ENCODE measurements at regions of chr6 and their contacts with region 1.

Region 1: DNA sequence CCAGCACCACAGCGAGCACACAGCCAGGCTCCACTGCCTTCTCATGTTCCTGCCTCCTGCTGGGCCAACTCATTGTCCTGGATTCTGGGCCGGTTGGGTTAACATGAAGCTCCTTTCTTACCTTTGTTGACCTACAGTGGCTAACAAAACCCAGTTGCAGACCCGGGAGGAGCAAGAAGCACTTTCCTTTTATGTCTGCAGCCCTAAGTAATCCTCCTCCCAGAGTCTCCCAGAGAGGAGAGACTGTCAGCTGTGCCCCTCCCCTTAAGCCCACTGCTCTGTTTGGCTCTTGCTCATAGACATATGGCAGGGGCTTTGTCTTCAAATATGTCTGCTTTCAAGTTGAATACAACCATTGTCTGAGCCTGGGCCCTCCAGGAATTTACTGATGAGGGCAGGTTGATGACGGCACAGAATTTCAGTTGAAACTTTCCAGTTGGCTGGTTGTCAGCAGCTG is 55.2 kb downstream of the PSMB1 start:
- DNase-seq: peak; percentile 66 to 67
- H3K4me3 ChIP-seq: peak overlapping the region in 1 of 4 experiments; percentile 21; a peak in 1 of 8 replicates
- H3K27ac ChIP-seq: no peak overlapping the region; the same call in 1 of the 2 replicates
- H3K4me1 ChIP-seq: peaks cover 0 to 13% (median 5%) of the 10 kb centered on the region in 4 experiments; a peak in 4 of 7 replicates
- H3K27me3 ChIP-seq: no peaks in the 10 kb centered on the region; a peak in 1 of 7 replicates
- CTCF ChIP-seq: no peak
- EP300 ChIP-seq: no peak
- POLR2A ChIP-seq: no peak
- RAD21 ChIP-seq: no peak

Region 2: GRCh38 chr6:170516783-170517616 is 19.1 kb after region 1 on chr6:
- CTCF ChIA-PET with region 1: interaction called, 11 read pairs
- POLR2A ChIA-PET with region 1: no interaction called
- DNase-seq: no peak
- H3K4me3 ChIP-seq: no peak overlapping the region
- H3K27ac ChIP-seq: no peak overlapping the region
- H3K4me1 ChIP-seq: no peaks in the 10 kb centered on the region
- H3K27me3 ChIP-seq: no peaks in the 10 kb centered on the region
- CTCF ChIP-seq: peak; percentile 2 to 79 (median 78)
- EP300 ChIP-seq: no peak
- POLR2A ChIP-seq: no peak
- RAD21 ChIP-seq: peak; percentile 93

Region 3: DNA sequence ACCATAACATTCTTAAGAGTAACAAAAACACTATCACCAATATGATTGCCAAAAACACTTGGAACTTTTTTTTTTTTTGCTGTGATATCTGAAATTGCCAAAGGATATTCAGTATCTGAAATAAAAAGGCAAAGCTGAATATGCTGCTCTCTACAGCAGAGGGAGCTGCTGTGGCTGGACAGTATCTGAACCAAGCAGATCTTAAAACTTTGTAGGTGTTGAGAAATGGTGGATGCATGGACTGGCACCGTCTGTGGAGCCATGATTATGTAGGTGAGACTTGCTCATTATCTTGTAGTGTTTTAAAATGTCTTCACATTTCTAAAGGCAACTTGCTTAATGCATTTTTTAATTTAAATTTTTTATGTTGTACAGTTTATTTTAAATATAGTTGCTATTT is 77.4 kb after region 1 on chr6:
- CTCF ChIA-PET with region 1: no interaction called
- POLR2A ChIA-PET with region 1: no interaction called
- DNase-seq: no peak
- H3K4me3 ChIP-seq: no peak overlapping the region
- H3K27ac ChIP-seq: no peak overlapping the region
- H3K4me1 ChIP-seq: no peaks in the 10 kb centered on the region
- H3K27me3 ChIP-seq: no peaks in the 10 kb centered on the region
- CTCF ChIP-seq: peak in 2 of 3 experiments; percentile 38 to 50; a peak in 3 of 4 replicates
- EP300 ChIP-seq: no peak
- POLR2A ChIP-seq: no peak
- RAD21 ChIP-seq: peak; percentile 48 to 60